Heart left ventricle (tissue), 16 donors: ENCODE measurements at regions of chr2 and their contacts with region 1.

Region 1: GRCh38 chr2:234135720-234136221 is 85.3 kb downstream of the SPP2 start:
- DNase-seq: peak; percentile 22 to 67 (median 35)
- ATAC-seq: peak; percentile 47 to 83 (median 70)
- H3K4me3 ChIP-seq: no peak overlapping the region
- H3K27ac ChIP-seq: no peak overlapping the region
- H3K4me1 ChIP-seq: no peaks in the 10 kb centered on the region
- H3K27me3 ChIP-seq: peaks cover 0 to 26% (median 4%) of the 10 kb centered on the region in 9 donors
- CTCF ChIP-seq: peak; percentile 54 to 82 (median 71)
- POLR2A ChIP-seq: no peak

Region 2: DNA sequence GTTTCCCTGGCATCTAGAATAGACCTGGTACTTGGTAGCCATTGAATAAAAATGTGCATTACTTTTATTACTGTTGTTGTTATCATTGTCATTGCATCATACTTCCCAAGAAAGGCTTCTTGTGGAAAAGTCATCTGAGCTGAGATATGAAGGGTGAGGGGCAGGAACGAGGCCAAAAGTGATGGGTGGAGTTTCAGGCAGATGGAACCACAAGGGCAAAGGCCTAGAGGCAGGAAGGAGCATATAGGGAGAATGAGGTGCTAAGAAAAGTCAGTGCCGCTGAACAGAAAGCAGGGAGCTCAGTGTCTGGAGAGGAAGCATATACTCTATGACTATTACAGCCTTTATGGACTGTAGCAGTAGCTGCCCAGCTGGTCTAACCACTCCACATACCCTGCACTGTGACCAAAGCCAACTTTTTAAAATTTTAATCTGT is 134.0 kb after region 1 on chr2:
- intact Hi-C with region 1: loop called in 1 of 10 experiments (anchors 10 kb)
- DNase-seq: no peak
- ATAC-seq: no peak
- H3K4me3 ChIP-seq: no peak overlapping the region
- H3K27ac ChIP-seq: no peak overlapping the region
- H3K4me1 ChIP-seq: peaks cover 0 to 8% (median 0%) of the 10 kb centered on the region in 12 donors
- H3K27me3 ChIP-seq: no peaks in the 10 kb centered on the region
- CTCF ChIP-seq: no peak
- POLR2A ChIP-seq: no peak

Region 3: DNA sequence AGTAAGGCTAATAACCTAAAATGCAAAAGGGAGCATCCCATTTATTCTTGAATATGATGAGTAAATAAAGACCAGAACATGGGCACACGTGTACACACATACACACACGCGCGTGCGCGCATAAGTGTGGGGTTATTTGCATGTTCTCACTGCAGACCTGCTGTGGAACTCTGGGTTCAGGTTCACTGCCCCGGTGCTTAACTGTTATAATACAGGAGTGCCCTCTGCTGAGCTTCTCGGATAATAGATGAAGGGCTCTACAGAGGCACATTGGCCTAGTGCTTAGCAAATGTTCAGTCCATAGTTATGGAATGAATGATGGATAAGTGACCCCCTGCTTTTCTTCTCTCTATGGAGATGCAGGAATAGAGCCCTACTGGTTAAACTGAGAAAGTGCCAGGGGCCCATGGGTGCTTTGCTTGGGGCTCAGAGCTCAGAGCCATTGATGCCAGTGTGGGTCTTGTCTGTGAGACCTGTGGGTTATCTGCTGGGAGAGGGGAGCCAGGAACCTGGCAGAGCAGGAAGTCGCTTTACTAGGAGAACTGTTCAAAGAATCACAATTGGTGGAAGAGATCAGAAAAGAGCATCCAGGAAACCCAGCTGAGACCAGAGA is 364.7 kb after region 1 on chr2:
- intact Hi-C with region 1: loop called (anchors 1 to 5 kb)
- DNase-seq: peak in 4 of 5 donors; percentile 34 to 55 (median 42)
- ATAC-seq: peak; percentile 49 to 72 (median 58)
- H3K4me3 ChIP-seq: no peak overlapping the region
- H3K27ac ChIP-seq: no peak overlapping the region
- H3K4me1 ChIP-seq: peaks cover under 1 to 14% (median 9%) of the 10 kb centered on the region in 12 donors
- H3K27me3 ChIP-seq: peaks cover 0 to 8% (median 3%) of the 10 kb centered on the region in 9 donors
- CTCF ChIP-seq: peak; percentile 40 to 73 (median 58)
- POLR2A ChIP-seq: no peak

Region 4: GRCh38 chr2:235106874-235107639 is 971.3 kb after region 1 on chr2:
- intact Hi-C with region 1: loop called in 4 of 10 experiments (anchors 5 to 10 kb)
- DNase-seq: peak; percentile 54 to 71 (median 67)
- ATAC-seq: peak; percentile 55 to 87 (median 74)
- H3K4me3 ChIP-seq: no peak overlapping the region
- H3K27ac ChIP-seq: no peak overlapping the region
- H3K4me1 ChIP-seq: peaks cover 0 to 13% (median 2%) of the 10 kb centered on the region in 12 donors
- H3K27me3 ChIP-seq: no peaks in the 10 kb centered on the region
- CTCF ChIP-seq: peak; percentile 41 to 84 (median 74)
- POLR2A ChIP-seq: no peak

Region 5: DNA sequence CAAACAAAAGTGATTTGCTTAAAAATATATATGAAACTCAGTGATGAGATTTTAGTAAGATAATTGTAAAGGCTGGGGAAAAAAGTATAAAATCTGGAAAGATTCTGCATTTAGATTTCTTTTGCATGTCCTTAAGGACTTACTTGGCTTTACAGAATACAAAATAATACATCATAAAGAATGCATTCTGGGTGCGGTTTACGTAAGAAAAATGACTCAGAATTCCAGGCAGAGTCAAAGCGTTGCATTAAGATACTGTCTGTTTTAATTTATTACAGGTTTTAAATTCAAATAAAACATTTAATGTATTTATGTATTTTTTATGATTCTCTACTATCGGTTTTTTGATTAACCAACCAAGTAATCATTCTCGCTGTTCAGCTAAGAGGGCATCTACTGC is 994.1 kb after region 1 on chr2:
- intact Hi-C with region 1: loop called in 1 of 10 experiments (anchors 10 kb)
- DNase-seq: no peak
- ATAC-seq: no peak
- H3K4me3 ChIP-seq: no peak overlapping the region
- H3K27ac ChIP-seq: no peak overlapping the region
- H3K4me1 ChIP-seq: no peaks in the 10 kb centered on the region
- H3K27me3 ChIP-seq: peaks cover 0 to 3% (median 0%) of the 10 kb centered on the region in 9 donors
- CTCF ChIP-seq: no peak
- POLR2A ChIP-seq: no peak